ENCODE measurements at regions of chr11 and their contacts with region 1.

Region 1: GRCh38 chr11:100575870-100576705 is 111.0 kb upstream of the ARHGAP42 start:
- DNase-seq: no peak
- H3K4me3 ChIP-seq: no peak overlapping the region
- CTCF ChIP-seq: peak; percentile 62

Region 2: DNA sequence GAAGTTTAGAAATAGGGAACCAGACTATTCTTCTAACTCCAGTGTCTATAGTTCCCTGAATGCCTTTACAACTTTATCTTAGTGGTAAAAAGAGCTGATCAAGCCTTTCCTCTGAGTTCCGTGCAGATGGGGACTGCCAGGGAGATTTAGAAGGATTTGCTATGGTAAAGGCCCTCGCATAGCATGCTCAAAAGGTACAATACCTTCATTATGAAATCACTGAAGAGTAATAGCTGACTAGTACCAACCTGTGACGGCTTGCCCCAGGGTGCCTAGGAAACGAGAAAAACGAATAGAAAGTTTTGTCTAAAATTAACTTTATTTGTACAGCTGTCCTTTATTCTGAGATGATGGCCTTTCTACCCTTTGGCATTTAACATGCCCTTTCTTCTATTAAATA is 39.1 kb before region 1 on chr11:
- CTCF ChIA-PET with region 1: no interaction called
- POLR2A ChIA-PET with region 1: no interaction called
- DNase-seq: no peak
- H3K4me3 ChIP-seq: no peak overlapping the region
- CTCF ChIP-seq: no peak

Region 3: GRCh38 chr11:100562128-100562527 is 14.0 kb before region 1 on chr11:
- CTCF ChIA-PET with region 1: interaction called, 10 read pairs
- POLR2A ChIA-PET with region 1: no interaction called
- DNase-seq: no peak
- H3K4me3 ChIP-seq: no peak overlapping the region
- CTCF ChIP-seq: no peak

Region 4: GRCh38 chr11:100592619-100593260 is 16.7 kb after region 1 on chr11:
- CTCF ChIA-PET with region 1: interaction called, 18 read pairs
- POLR2A ChIA-PET with region 1: no interaction called
- DNase-seq: no peak
- H3K4me3 ChIP-seq: no peak overlapping the region
- CTCF ChIP-seq: no peak

Region 5: DNA sequence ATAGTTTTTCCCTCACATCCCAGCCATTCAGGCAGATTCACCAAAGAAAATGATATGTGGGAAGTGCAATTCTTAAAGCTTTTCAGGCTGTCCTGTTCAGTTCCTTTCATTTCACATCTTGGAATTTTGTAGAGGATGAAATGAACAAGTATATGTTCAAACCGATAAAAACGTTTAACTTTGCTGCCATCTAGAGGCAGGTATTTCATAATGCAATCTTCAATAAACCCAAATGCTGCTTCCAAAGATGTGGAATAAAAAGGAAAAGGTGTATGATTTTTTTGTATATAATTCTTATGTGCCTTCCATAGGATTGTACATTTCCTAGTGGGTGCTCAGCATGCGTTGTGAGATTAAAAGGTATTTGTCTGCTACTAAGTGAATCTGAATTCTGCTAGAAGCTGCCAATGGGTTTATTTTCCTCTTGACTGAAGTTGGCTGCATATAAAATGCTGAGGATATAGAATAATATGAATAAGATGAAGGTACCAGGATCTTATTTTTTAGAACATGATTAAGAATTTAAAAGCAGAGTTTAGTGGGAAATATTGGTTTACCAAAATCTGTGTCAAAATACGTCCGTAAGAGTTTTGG is 354.2 kb after region 1 on chr11:
- CTCF ChIA-PET with region 1: interaction called, 144 read pairs
- POLR2A ChIA-PET with region 1: no interaction called
- DNase-seq: peak; percentile 29
- H3K4me3 ChIP-seq: no peak overlapping the region
- CTCF ChIP-seq: no peak

Region 6: DNA sequence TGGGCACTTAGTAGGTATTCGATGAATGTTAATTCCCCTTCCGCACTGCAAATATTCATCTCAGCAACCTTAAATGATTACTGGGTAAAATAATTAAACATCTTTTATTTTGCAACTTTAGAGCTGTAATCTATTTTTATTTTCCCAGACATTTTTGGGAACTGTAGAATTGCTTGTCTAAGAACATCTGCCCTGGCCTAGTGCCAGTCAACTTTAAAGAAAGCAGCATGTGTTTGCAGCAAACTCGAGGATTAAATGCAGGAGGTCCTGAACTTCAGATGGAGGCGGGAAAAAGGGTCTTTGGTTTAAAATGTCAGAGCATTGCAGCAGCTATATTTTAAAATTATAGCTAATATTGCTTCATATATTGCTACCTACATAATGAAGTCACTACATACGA is 363.5 kb after region 1 on chr11:
- CTCF ChIA-PET with region 1: interaction called, 144 read pairs
- POLR2A ChIA-PET with region 1: no interaction called
- DNase-seq: no peak
- H3K4me3 ChIP-seq: no peak overlapping the region
- CTCF ChIP-seq: no peak